Heart right ventricle (tissue), 16 donors: ENCODE measurements at regions of chr15 and their contacts with region 1.

Region 1: DNA sequence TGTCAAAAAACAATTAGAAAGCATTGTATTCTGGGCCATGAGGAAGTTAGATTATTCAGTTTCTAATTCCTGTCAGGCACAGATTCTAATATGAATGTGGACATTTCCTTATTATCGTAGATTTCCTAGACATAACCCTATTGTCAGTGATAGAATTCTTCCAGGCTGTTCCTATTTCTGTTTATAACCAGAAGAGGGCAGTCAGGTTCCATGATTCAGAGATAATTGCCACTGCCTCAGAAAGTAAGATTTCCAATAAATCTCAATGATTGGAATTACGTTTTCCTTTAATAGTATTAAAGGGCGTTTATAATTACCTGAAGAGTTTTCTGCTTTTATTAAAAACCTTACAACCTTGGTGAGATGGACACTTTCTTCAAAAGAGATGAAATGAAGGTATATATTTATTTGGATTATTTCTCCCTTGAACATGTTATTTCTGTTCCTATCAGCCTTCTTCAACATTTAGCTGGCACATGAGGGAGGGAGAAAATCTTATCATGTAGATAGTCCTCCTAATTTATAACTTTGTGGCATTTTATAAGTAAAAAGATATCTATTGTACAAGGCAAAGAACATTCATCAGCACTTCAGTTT is 439.2 kb downstream of the MCTP2 start:
- DNase-seq: peak in 1 of 2 donors; percentile 13
- ATAC-seq: peak in 5 of 8 donors; percentile 41 to 63 (median 54)
- H3K4me3 ChIP-seq: no peak overlapping the region
- H3K27ac ChIP-seq: peak overlapping the region in 4 of 10 donors; percentile 5 to 70 (median 29)
- H3K4me1 ChIP-seq: peaks cover 0 to 20% (median 8%) of the 10 kb centered on the region in 9 donors
- H3K27me3 ChIP-seq: peaks cover 0 to 5% (median 0%) of the 10 kb centered on the region in 7 donors
- CTCF ChIP-seq: peak; percentile 54 to 86 (median 76)

Region 2: DNA sequence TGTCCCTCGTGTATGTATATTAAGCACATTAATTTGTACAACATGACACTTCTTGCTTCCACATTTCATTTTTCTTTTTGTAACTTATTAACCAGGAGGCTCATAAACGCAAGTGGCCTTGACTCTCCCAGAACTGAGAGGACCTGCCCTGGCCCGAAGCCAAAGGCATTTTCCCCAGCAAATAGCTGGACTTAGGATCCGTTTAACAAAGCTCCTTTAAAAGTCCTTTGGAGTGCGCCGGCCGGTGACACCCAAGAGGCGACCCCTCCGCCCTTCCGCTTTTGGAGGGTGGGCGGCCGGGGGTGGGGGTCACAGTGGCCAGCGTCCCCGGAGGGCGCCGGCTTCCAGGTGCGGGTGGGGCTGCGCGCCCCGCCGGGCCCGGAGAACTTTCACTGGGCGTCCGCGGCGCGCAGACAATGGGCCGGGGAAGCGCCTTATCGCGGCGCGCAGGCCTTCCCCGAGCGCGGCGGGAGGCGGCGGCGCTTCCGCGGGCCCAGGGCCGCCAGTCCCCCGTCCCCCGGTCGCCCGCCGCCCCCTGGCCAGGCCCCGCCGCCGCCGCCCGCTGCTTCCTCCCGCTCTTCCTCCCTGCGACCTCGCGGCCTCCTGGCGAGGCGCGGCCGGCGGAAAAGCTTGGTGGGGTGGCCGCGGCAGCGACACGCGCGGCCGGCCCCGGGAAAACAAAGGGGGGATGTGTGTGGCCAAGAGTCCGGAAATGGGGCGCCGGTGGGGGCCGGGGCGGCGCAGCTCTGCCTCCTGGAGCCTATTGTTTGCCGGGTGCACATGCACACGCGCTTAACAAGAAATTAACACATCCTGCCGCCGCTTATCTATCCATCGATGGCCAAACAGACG is 174.2 kb after region 1 on chr15:
- intact Hi-C with region 1: loop called in 2 of 10 experiments (anchors 5 to 10 kb)
- DNase-seq: peak; percentile 76 to 81
- ATAC-seq: peak; percentile 92 to 95 (median 94)
- H3K4me3 ChIP-seq: peak overlapping the region in 9 of 10 donors; percentile 14 to 53 (median 45)
- H3K27ac ChIP-seq: peak overlapping the region in 9 of 10 donors; percentile 36 to 77 (median 67)
- H3K4me1 ChIP-seq: peaks cover 0 to 28% (median 8%) of the 10 kb centered on the region in 9 donors
- H3K27me3 ChIP-seq: peaks cover 0 to 28% (median 9%) of the 10 kb centered on the region in 7 donors
- CTCF ChIP-seq: peak in 2 of 9 donors; percentile 18 to 27

Region 3: DNA sequence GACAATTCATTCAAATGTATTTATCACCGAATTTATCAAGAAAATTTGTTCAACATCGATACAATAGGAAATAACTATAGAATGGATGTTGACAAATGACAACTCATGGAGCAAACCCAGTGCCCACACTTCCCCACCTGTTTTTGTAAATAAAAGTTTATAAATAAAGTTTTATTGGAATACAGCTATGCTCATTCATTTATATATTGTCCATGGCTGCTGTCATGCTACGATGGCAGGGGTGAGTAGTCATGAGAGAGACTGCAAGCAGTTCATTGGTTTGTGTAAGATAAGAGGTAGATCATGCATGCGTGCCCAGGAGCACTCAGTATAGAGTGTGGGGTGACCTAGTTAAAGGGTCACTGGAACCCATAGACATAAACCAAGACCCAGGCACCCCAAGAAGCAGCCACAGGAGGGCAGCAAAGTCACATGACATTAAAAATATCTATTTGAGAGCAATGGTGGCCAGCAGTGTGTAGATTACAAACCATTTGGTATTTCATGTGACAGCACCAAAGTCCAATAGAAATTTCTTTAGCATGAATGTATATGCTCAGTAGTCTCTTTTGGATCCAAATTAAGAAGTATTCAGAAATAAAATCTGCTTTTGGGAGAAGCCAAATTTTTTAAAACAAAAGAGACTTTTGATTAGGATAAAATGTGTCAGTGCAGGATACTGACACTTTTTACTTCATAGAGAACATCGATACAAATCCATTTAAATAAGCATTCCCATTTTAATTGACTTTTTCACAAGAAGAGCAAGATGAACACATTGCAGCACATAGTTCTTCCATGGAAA is 355.6 kb after region 1 on chr15:
- intact Hi-C with region 1: loop called in 1 of 10 experiments (anchors 10 kb)
- DNase-seq: peak; percentile 32 to 54
- ATAC-seq: peak in 4 of 8 donors; percentile 31 to 53 (median 41)
- H3K4me3 ChIP-seq: no peak overlapping the region
- H3K27ac ChIP-seq: no peak overlapping the region
- H3K4me1 ChIP-seq: no peaks in the 10 kb centered on the region
- H3K27me3 ChIP-seq: no peaks in the 10 kb centered on the region
- CTCF ChIP-seq: peak in 8 of 9 donors; percentile 44 to 66 (median 56)

Region 4: DNA sequence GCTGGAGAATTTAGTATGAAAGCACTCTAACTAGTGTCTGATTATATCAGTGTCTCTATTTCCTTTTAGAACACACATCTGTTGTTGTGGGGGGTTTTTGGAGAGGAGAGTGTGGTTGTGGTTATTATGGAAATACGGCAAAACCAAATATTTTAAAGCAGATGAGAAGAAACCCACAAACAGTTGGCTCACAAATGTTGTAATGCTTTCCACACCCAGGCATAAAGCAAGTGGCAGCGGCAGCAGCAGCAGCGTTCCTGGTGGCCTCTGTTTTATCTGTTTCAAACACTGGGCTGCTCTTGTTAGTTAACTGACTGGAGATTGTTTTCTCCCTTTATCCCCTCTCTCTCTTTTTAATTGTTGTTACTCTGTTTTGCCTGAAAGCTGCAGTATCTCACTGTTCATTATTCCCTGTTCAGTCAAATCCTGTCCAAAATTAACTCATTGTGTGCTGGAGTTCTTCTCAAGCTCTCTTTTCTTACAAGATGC is 614.4 kb after region 1 on chr15:
- intact Hi-C with region 1: loop called in 2 of 10 experiments (anchors 5 to 10 kb)
- DNase-seq: no peak
- ATAC-seq: peak in 4 of 8 donors; percentile 40 to 65 (median 50)
- H3K4me3 ChIP-seq: no peak overlapping the region
- H3K27ac ChIP-seq: peak overlapping the region in 7 of 10 donors; percentile 5 to 36 (median 17)
- H3K4me1 ChIP-seq: peaks cover 0 to 29% (median 0%) of the 10 kb centered on the region in 9 donors
- H3K27me3 ChIP-seq: peaks cover 0 to 4% (median 0%) of the 10 kb centered on the region in 7 donors
- CTCF ChIP-seq: peak in 5 of 9 donors; percentile 13 to 40 (median 34)

Region 5: GRCh38 chr15:96345560-96346399 is 1675.2 kb after region 1 on chr15:
- intact Hi-C with region 1: loop called in 4 of 10 experiments (anchors 10 kb)
- DNase-seq: peak; percentile 69 to 82
- ATAC-seq: peak; percentile 58 to 85 (median 70)
- H3K4me3 ChIP-seq: peak overlapping the region; percentile 2 to 81 (median 56)
- H3K27ac ChIP-seq: peak overlapping the region; percentile 59 to 94 (median 90)
- H3K4me1 ChIP-seq: peaks cover 0 to 83% (median 36%) of the 10 kb centered on the region in 9 donors
- H3K27me3 ChIP-seq: peaks cover 4 to 100% (median 77%) of the 10 kb centered on the region in 7 donors
- CTCF ChIP-seq: peak; percentile 40 to 83 (median 65)